ENCODE measurements at regions of chr9 and their contacts with region 1.

Region 1: DNA sequence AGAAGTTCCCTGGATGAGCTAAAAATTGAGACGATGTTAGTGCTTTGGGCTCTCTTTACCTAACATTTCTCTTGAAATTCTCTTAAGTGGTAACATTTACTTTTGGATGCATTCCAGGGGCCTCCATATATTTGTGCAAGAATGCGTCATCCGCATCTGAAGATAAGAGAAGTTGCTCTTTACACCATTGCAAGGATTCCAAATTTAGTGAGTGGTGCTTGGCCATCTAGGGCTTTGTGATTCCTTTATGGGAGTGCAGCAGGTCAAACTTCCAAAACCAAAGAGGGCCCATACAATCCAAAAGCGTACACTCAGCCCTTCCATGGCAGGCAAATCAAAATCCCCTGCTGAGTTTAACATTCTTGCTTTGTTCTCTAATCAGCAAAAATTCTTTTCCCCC is 102.0 kb upstream of the DMAC1 start:
- DNase-seq: peak; percentile 76 to 81
- H3K4me3 ChIP-seq: no peak overlapping the region
- H3K4me3 Mint-ChIP-seq: no peak overlapping the region
- H3K27ac Mint-ChIP-seq: peak overlapping the region; percentile 59
- H3K4me1 ChIP-seq: peaks cover 37% of the 10 kb centered on the region
- H3K4me1 Mint-ChIP-seq: peaks cover 7% of the 10 kb centered on the region
- H3K27me3 ChIP-seq: no peaks in the 10 kb centered on the region
- H3K27me3 Mint-ChIP-seq: no peaks in the 10 kb centered on the region
- CTCF ChIP-seq: no peak

Region 2: DNA sequence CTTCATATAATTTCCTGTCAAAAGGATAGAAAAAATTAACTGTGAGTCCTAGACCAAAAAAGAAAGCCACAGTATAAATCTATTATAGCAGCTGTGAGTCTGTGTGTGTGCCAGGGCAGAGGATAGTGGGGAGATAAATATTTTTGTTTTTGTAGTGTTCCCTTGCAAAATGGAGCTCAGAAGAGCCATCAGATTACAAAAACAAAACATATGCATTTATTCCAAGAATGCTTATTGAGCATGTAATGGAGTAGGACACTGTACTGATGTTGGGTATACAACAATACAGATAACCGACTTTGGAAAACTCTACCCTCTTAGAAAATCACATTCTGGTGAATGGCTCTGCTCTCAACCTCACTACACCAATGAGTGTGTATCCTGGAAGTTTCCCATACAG is 213.0 kb before region 1 on chr9:
- CTCF ChIA-PET with region 1: no interaction called
- POLR2A ChIA-PET with region 1: no interaction called
- intact Hi-C with region 1: loop called (anchors 5 kb)
- DNase-seq: no peak
- H3K4me3 ChIP-seq: no peak overlapping the region
- H3K4me3 Mint-ChIP-seq: no peak overlapping the region
- H3K27ac Mint-ChIP-seq: no peak overlapping the region
- H3K4me1 ChIP-seq: peaks cover 21% of the 10 kb centered on the region
- H3K4me1 Mint-ChIP-seq: peaks cover 10% of the 10 kb centered on the region
- H3K27me3 ChIP-seq: no peaks in the 10 kb centered on the region
- H3K27me3 Mint-ChIP-seq: no peaks in the 10 kb centered on the region
- CTCF ChIP-seq: no peak

Region 3: DNA sequence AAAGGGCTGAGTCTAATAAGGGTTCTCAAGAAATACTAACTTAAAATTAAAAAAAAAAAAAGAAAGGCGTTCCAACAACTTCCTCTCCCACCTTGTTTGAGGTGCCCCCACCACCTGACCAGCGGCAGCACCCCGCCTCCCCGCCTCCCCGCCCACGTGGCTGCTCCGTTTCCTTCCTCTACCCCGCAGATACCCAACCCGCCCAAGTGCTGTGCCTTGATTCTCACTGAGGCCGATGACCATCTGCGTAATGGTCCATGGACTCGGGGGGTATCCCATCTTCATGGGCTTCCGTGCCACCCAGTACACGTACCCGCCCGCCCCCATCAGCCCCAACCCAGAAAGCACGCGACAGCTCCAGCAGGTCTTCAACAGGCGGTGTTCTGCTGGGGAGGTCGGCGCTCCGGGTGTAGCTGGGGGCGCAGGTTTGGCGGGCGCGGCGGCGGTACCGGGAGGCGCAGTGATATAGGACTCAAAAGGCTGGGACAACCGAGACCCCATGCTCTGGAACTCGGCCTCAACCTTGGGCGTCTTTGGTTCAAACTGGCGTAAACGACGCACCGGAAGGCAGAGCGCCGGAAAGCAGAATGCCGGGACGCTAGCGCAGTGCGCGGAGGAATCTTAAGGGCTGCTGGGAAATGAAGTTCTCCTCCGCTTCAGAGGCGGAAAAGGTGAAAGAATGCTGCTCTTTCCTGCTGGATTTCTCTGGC is 102.2 kb before region 1 on chr9 and contains the start of gene DMAC1:
- CTCF ChIA-PET with region 1: no interaction called
- POLR2A ChIA-PET with region 1: no interaction called
- intact Hi-C with region 1: loop called (anchors 5 kb)
- DNase-seq: peak; percentile 77 to 78
- H3K4me3 ChIP-seq: peak within 1 kb of the TSS; percentile 81
- H3K4me3 Mint-ChIP-seq: peak within 1 kb of the TSS; percentile 93
- H3K27ac Mint-ChIP-seq: peak within 1 kb of the TSS; percentile 90
- H3K4me1 ChIP-seq: peaks cover 8% of the 10 kb centered on the region
- H3K4me1 Mint-ChIP-seq: no peaks in the 10 kb centered on the region
- H3K27me3 ChIP-seq: no peaks in the 10 kb centered on the region
- H3K27me3 Mint-ChIP-seq: no peaks in the 10 kb centered on the region
- CTCF ChIP-seq: no peak
- total RNA-seq, gene DMAC1: 59.4 and 67.3 TPM in 2 replicates

Region 4: GRCh38 chr9:7967093-7967827 is 65.6 kb after region 1 on chr9:
- CTCF ChIA-PET with region 1: no interaction called
- POLR2A ChIA-PET with region 1: no interaction called
- intact Hi-C with region 1: loop called (anchors 5 kb)
- DNase-seq: no peak
- H3K4me3 ChIP-seq: no peak overlapping the region
- H3K4me3 Mint-ChIP-seq: no peak overlapping the region
- H3K27ac Mint-ChIP-seq: peak overlapping the region; percentile 76
- H3K4me1 ChIP-seq: peaks cover 21% of the 10 kb centered on the region
- H3K4me1 Mint-ChIP-seq: peaks cover 6% of the 10 kb centered on the region
- H3K27me3 ChIP-seq: no peaks in the 10 kb centered on the region
- H3K27me3 Mint-ChIP-seq: no peaks in the 10 kb centered on the region
- CTCF ChIP-seq: no peak

Region 5: DNA sequence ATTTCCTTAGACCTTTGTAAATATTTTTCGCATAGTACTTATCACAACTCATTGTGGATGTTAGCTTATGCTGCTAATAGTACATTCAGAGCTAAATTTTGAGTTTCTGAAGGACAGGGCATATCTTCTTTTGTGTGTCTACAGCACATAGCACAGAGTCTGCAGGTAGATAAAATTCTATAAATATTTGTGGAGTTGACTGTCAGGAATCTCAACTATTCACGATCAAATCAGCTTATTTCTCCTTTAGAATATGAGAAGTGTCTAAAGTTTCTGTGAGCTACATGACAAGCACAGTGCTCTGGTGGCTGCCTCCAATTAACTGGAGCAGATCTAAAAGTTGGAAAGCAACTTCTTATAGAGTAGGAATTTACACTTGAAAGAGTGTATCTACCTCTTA is 92.9 kb after region 1 on chr9:
- CTCF ChIA-PET with region 1: no interaction called
- POLR2A ChIA-PET with region 1: no interaction called
- intact Hi-C with region 1: loop called (anchors 1 kb)
- DNase-seq: no peak
- H3K4me3 ChIP-seq: no peak overlapping the region
- H3K4me3 Mint-ChIP-seq: peak overlapping the region; percentile 50
- H3K27ac Mint-ChIP-seq: peak overlapping the region; percentile 73
- H3K4me1 ChIP-seq: peaks cover 32% of the 10 kb centered on the region
- H3K4me1 Mint-ChIP-seq: peaks cover 14% of the 10 kb centered on the region
- H3K27me3 ChIP-seq: no peaks in the 10 kb centered on the region
- H3K27me3 Mint-ChIP-seq: no peaks in the 10 kb centered on the region
- CTCF ChIP-seq: no peak

Region 6: GRCh38 chr9:8062459-8062858 is 160.8 kb after region 1 on chr9:
- CTCF ChIA-PET with region 1: no interaction called
- POLR2A ChIA-PET with region 1: no interaction called
- intact Hi-C with region 1: no loop called
- DNase-seq: no peak
- H3K4me3 ChIP-seq: no peak overlapping the region
- H3K4me3 Mint-ChIP-seq: no peak overlapping the region
- H3K27ac Mint-ChIP-seq: no peak overlapping the region
- H3K4me1 ChIP-seq: no peaks in the 10 kb centered on the region
- H3K4me1 Mint-ChIP-seq: no peaks in the 10 kb centered on the region
- H3K27me3 ChIP-seq: no peaks in the 10 kb centered on the region
- H3K27me3 Mint-ChIP-seq: no peaks in the 10 kb centered on the region
- CTCF ChIP-seq: no peak

Region 7: DNA sequence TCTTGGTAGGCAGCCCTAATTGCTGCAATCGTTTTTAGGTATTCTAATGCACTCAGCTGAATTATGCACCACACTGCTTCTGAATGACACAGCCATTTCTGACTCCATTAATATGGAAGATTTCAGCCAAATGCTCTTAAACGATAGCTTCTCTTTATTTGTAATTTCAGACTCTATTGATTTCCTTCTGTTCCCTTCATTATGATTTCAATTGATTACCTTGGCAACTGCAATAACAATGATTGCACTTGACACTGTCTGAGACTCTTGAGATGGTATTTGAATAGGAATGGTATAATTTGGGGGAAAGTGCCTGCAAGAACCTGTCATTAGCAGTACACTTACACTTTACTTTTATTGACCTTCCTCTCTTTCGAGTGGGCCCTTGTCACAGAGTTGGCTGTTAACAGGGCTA is 194.1 kb after region 1 on chr9:
- CTCF ChIA-PET with region 1: no interaction called
- POLR2A ChIA-PET with region 1: no interaction called
- intact Hi-C with region 1: no loop called
- DNase-seq: no peak
- H3K4me3 ChIP-seq: no peak overlapping the region
- H3K4me3 Mint-ChIP-seq: no peak overlapping the region
- H3K27ac Mint-ChIP-seq: no peak overlapping the region
- H3K4me1 ChIP-seq: no peaks in the 10 kb centered on the region
- H3K4me1 Mint-ChIP-seq: no peaks in the 10 kb centered on the region
- H3K27me3 ChIP-seq: no peaks in the 10 kb centered on the region
- H3K27me3 Mint-ChIP-seq: no peaks in the 10 kb centered on the region
- CTCF ChIP-seq: no peak

Region 8: DNA sequence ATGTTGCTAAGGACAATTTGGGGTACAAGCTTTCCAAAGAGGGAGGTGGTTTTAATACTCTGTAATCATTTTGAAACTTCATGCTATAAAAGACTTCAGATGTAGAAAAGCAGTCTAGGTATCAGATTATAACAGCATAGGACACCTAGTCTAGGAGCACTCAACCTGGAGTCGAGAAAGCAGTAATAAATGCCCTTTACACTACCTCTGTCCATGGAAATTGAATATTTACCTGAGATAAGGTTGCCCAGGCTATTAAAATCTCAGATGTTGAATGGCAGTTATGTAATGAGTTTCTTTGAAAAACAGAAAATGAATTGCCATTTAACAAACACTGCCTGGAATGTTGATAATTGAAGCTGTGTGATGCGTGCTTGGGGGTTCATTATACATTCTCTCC is 459.7 kb after region 1 on chr9:
- CTCF ChIA-PET with region 1: no interaction called
- POLR2A ChIA-PET with region 1: no interaction called
- intact Hi-C with region 1: loop called (anchors 1 kb)
- DNase-seq: peak in 1 of 2 experiments; percentile 17
- H3K4me3 ChIP-seq: no peak overlapping the region
- H3K4me3 Mint-ChIP-seq: no peak overlapping the region
- H3K27ac Mint-ChIP-seq: peak overlapping the region; percentile 72
- H3K4me1 ChIP-seq: peaks cover 27% of the 10 kb centered on the region
- H3K4me1 Mint-ChIP-seq: peaks cover 5% of the 10 kb centered on the region
- H3K27me3 ChIP-seq: no peaks in the 10 kb centered on the region
- H3K27me3 Mint-ChIP-seq: no peaks in the 10 kb centered on the region
- CTCF ChIP-seq: no peak

Region 9: GRCh38 chr9:8437876-8438275 is 536.3 kb after region 1 on chr9:
- CTCF ChIA-PET with region 1: no interaction called
- POLR2A ChIA-PET with region 1: no interaction called
- intact Hi-C with region 1: loop called (anchors 5 kb)
- DNase-seq: peak; percentile 37 to 39
- H3K4me3 ChIP-seq: no peak overlapping the region
- H3K4me3 Mint-ChIP-seq: no peak overlapping the region
- H3K27ac Mint-ChIP-seq: peak overlapping the region; percentile 84
- H3K4me1 ChIP-seq: peaks cover 17% of the 10 kb centered on the region
- H3K4me1 Mint-ChIP-seq: peaks cover 17% of the 10 kb centered on the region
- H3K27me3 ChIP-seq: no peaks in the 10 kb centered on the region
- H3K27me3 Mint-ChIP-seq: no peaks in the 10 kb centered on the region
- CTCF ChIP-seq: no peak

Measured in Caco-2 (cell line).